Posterior cingulate gyrus (tissue), 11 donors: ENCODE measurements at regions of chr2 and their contacts with region 1.

Region 1: DNA sequence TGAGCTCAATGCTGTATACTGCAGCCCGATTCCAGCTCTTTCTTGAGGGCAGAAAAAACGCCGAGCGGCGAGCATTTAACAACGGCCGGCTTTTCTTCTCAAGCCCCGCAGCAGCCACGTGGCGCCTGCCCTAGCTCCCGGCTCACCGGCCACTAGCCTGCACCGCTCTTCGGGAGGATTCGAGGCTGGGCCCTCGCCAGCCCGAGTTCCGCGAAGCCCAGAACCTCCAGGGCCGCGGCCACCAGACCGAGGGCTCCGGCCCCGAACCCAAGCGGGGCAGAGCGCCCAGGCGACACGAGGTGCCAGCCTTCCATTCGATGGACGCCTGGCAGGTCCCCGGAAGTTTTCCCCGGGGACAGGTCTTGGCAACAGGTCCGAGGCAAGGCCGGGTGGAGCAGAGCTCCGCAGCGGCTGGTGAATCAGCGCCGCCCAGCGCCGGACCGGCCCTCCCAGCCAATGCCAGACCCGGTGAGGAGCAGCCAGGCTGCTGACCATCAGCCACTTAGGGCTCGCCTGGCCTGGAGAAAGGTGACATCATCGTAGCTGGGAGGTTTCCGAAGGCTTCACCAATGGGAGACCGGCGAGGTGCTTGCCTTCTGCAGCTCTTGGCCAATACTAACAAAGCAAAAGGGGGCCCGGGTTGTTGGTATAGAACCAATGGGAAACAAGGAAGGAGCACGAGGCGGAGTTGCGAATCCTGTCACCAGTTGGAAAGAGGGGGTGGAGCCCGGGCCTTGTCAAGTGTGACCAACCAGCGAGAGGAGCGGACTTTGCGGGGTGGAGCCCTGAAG is 544 bp upstream of the MXD1 start:
- DNase-seq: peak; percentile 98 to 100 (median 100)

Region 2: DNA sequence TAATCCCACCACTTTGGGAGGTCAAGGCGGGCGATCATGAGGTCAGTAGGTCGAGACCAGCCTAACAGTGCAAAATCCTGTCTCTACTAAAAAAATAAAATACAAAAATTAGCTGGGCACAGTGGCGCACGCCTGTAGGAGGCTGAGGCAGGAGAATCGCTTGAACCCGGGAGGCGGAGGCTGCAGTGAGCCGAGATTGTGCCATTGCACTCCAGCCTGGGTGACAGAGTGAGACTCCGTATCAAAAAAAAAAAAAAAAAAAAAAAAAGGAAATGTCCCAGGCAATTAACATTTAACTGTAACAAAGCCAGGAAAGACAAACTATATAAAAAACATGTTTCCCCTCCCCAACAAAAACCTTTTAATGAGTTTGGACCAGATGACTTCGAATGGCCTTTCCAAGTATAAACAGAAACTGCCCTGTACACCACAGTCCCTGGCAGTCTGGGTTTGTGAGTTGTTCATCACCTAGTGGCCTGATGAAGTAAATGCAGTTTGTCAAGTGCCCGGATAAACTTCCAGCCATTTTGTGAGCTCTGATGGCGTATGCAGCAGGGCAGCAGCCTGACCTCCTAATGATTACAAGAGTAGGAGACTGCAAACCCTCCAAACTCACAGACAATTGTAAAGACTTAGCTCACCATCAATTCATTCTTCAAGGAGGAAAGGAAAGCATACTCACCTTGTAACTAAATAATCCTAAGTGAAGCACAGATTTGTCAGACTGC is 156.3 kb after region 1 on chr2:
- intact Hi-C with region 1: loop called (anchors 1 kb)
- DNase-seq: peak in 8 of 10 donors; percentile 33 to 92 (median 66)

Region 3: DNA sequence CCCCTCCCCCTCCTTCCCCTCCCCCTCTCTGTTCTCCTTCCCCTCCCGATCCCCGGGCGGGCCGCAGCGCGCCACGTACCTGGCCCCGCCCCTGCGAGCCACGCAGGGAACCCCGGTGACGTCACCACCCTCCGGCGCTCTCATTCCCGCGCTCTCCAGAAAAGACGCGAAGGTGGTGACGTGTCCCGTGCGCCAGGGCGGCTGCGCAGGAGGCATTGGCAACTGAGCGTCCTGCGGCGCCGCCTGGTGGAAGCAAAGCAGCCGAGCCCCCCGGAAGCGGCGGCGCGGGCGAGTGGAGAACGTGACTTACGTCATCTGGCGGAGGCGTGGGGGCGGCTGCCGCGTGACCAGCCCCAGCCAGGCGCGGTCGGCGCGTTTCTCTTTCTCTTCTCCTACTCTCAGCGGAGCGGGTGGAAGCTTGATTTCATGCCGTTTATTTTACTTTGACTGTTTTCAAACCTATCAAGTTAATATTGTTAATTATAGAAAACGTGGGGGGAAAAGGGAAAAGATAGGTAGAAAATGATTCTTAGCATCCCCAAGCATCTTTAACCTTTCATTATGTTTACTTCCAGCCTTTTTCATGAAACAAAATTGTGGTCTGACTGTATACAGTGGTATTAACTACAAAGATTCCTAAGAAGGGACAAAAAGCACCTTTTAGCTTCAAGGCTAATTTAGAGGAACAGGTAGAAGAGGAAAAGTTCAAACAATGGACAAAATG is 228.4 kb after region 1 on chr2:
- intact Hi-C with region 1: loop called (anchors 1 kb)
- DNase-seq: peak; percentile 92 to 99 (median 96)